AG04450 (cell line): ENCODE measurements at regions of chr20 and their contacts with region 1.

Region 1: DNA sequence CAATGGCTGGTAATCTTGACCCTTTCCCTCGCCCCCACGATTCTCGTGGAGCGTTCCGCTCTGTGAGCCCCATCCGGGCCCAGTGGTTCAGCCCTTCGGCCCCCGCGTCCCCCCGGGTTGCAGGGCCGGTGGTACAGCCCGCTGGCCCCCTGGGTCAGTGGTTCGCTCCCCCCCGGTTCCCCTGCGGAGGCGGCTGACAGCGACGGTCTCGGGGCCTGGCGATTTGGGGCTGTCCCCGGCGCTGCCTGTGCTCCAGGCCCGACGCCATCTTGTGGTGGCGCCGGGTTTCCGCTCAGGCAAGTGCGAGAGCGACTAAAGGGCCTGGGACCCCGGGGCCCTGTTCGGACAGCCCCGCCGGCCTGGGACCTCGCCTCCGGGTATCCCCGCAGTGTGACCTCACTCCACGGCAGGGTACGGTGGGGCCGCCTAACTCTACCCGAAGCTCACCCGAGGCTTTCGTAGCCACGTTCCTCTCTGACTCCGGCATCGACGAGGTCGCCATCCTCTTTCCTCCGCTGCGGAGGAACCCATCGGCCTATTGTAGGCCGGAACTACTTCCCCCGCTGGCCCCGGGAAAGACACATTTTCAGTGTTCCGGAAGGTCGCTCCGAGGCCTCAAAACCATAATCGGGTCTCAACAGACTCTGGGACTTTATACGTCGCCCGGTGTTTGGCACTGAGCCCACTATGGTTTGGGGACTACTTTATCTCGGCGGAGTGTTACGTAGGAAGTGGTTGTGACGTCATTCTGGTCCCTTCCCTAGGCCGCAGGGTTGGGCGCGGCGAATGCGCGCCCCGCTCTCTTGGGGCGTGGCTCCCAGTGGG is at the start of gene ZNF335:
- DNase-seq: peak; percentile 93
- H3K4me3 ChIP-seq: peak within 1 kb of the TSS; percentile 97
- H3K27ac ChIP-seq: peak within 1 kb of the TSS; percentile 100
- H3K27me3 ChIP-seq: no peaks in the 10 kb centered on the region
- CTCF ChIP-seq: peak; percentile 25; the same call in 1 of the 2 replicates
- polyA plus RNA-seq, gene ZNF335: 5.5 and 7.6 TPM in 2 replicates

Region 2: GRCh38 chr20:45792332-45792686 is 179.6 kb before region 1 on chr20:
- CTCF ChIA-PET with region 1: interaction called, 10 read pairs
- POLR2A ChIA-PET with region 1: no interaction called
- DNase-seq: no peak
- H3K4me3 ChIP-seq: peak overlapping the region; percentile 91
- H3K27ac ChIP-seq: peak overlapping the region; percentile 31
- H3K27me3 ChIP-seq: no peaks in the 10 kb centered on the region
- CTCF ChIP-seq: no peak

Region 3: GRCh38 chr20:45867819-45868176 is 104.1 kb before region 1 on chr20:
- CTCF ChIA-PET with region 1: interaction called, 11 read pairs
- POLR2A ChIA-PET with region 1: no interaction called
- DNase-seq: no peak
- H3K4me3 ChIP-seq: no peak overlapping the region
- H3K27ac ChIP-seq: peak overlapping the region; percentile 65
- H3K27me3 ChIP-seq: no peaks in the 10 kb centered on the region
- CTCF ChIP-seq: no peak

Region 4: GRCh38 chr20:45934586-45935415 is 37.1 kb before region 1 on chr20 and contains the start of gene PCIF1:
- CTCF ChIA-PET with region 1: interaction called, 28 read pairs
- POLR2A ChIA-PET with region 1: interaction called, 21 read pairs
- DNase-seq: peak; percentile 98
- H3K4me3 ChIP-seq: peak within 1 kb of the TSS; percentile 92
- H3K27ac ChIP-seq: peak within 1 kb of the TSS; percentile 98
- H3K27me3 ChIP-seq: no peaks in the 10 kb centered on the region
- CTCF ChIP-seq: no peak
- polyA plus RNA-seq, gene PCIF1: 11.5 and 14.6 TPM in 2 replicates

Region 5: GRCh38 chr20:45987108-45987780 is 15.4 kb after region 1 on chr20:
- CTCF ChIA-PET with region 1: interaction called, 26 read pairs
- POLR2A ChIA-PET with region 1: no interaction called
- DNase-seq: no peak
- H3K4me3 ChIP-seq: no peak overlapping the region
- H3K27ac ChIP-seq: no peak overlapping the region
- H3K27me3 ChIP-seq: peaks cover 14% of the 10 kb centered on the region
- CTCF ChIP-seq: peak; percentile 80